Mammary epithelial cell (primary cell): ENCODE measurements at regions of chr3 and their contacts with region 1.

Region 1: DNA sequence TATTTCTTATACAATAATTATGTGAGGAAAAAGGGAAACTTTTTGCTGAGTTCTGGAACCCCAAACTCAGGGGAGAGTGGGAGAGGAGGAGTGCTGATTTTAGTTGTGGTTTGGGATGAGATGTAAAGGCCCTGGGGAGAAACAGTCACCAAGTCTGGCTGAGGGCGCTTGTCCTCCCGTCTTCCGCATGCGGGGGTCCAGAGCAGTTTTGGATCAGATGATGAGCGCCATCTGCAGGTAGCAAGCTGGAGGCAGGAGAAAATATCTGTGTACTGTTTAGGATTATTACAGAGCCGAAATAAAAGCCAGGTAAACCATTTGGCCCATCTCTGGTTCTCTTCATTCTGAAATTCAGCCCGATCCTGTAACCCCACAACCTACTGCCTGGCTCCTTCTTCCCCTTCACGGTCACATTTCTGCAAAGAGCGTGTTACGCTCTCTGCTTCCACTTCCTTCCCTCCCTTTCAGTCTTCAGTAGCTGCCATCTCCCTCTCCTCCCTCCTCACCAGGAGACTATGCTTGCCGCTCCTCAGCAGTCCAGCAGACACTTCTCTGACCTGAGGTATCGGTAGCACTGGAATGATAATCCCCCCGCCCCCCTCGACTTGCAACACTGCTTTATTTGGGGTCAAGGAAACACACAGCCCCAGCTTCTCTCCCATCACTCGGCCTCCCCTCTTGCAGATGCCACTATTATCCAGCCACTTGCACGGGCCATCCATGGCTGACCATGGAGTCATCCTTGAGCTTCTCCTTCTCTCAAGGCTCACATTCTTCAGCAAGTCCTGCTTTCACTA is 1.4 kb upstream of the PARP14 start:
- DNase-seq: peak; percentile 63
- H3K4me3 ChIP-seq: peak overlapping the region; percentile 20 to 83 (median 25)
- H3K27ac ChIP-seq: peak overlapping the region; percentile 44
- H3K4me1 ChIP-seq: peaks cover 26% of the 10 kb centered on the region
- H3K27me3 ChIP-seq: no peaks in the 10 kb centered on the region
- CTCF ChIP-seq: peak; percentile 66 to 82

Region 2: GRCh38 chr3:122392868-122393844 is 286.1 kb before region 1 on chr3:
- CTCF ChIA-PET with region 1: interaction called, 11 read pairs
- dilution Hi-C with region 1: no loop called
- in situ Hi-C with region 1: no loop called
- intact Hi-C with region 1: loop called (anchors 1 kb)
- DNase-seq: peak; percentile 32
- H3K4me3 ChIP-seq: no peak overlapping the region
- H3K27ac ChIP-seq: no peak overlapping the region
- H3K4me1 ChIP-seq: peaks cover 15% of the 10 kb centered on the region
- H3K27me3 ChIP-seq: no peaks in the 10 kb centered on the region
- CTCF ChIP-seq: peak; percentile 73 to 83

Region 3: GRCh38 chr3:122514123-122515019 is 164.9 kb before region 1 on chr3 and contains the start of gene KPNA1:
- CTCF ChIA-PET with region 1: no interaction called
- dilution Hi-C with region 1: no loop called
- in situ Hi-C with region 1: no loop called
- intact Hi-C with region 1: loop called (anchors 1 kb)
- DNase-seq: peak; percentile 88
- H3K4me3 ChIP-seq: peak within 1 kb of the TSS; percentile 81 to 87 (median 82)
- H3K27ac ChIP-seq: peak within 1 kb of the TSS; percentile 75
- H3K4me1 ChIP-seq: peaks cover 10% of the 10 kb centered on the region
- H3K27me3 ChIP-seq: no peaks in the 10 kb centered on the region
- CTCF ChIP-seq: no peak
- total RNA-seq, gene KPNA1: 70.0 to 95.3 TPM

Region 4: GRCh38 chr3:122564155-122564912 is 114.9 kb before region 1 on chr3 and contains the starts of genes DTX3L and PARP9:
- CTCF ChIA-PET with region 1: no interaction called
- dilution Hi-C with region 1: no loop called
- in situ Hi-C with region 1: loop called (anchors 10 to 25 kb)
- intact Hi-C with region 1: loop called (anchors 1 kb)
- DNase-seq: peak; percentile 77
- H3K4me3 ChIP-seq: peak within 1 kb of the TSS; percentile 87 to 93 (median 91)
- H3K27ac ChIP-seq: peak within 1 kb of the TSS; percentile 76
- H3K4me1 ChIP-seq: peaks cover 12% of the 10 kb centered on the region
- H3K27me3 ChIP-seq: no peaks in the 10 kb centered on the region
- CTCF ChIP-seq: no peak
- total RNA-seq, gene DTX3L: 10.7 to 15.6 TPM
- total RNA-seq, gene PARP9: 6.4 to 10.0 TPM

Region 5: GRCh38 chr3:123258811-123259420 is 579.6 kb after region 1 on chr3:
- CTCF ChIA-PET with region 1: interaction called, 3 read pairs
- dilution Hi-C with region 1: no loop called
- in situ Hi-C with region 1: no loop called
- intact Hi-C with region 1: loop called (anchors 5 kb)
- DNase-seq: peak; percentile 41
- H3K4me3 ChIP-seq: no peak overlapping the region
- H3K27ac ChIP-seq: no peak overlapping the region
- H3K4me1 ChIP-seq: peaks cover 4% of the 10 kb centered on the region
- H3K27me3 ChIP-seq: no peaks in the 10 kb centered on the region
- CTCF ChIP-seq: peak; percentile 39 to 61